ENCODE measurements at regions of chr11 and their contacts with region 1.

Region 1: GRCh38 chr11:76152086-76152681 is 54.1 kb downstream of the WNT11 start:
- DNase-seq: peak; percentile 95
- ATAC-seq: peak; percentile 98
- H3K4me3 Mint-ChIP-seq: peak overlapping the region; percentile 61
- H3K27ac Mint-ChIP-seq: peak overlapping the region; percentile 63
- H3K4me1 Mint-ChIP-seq: peaks cover 25% of the 10 kb centered on the region
- H3K27me3 Mint-ChIP-seq: peaks cover 9% of the 10 kb centered on the region
- CTCF ChIP-seq: peak; percentile 96

Region 2: DNA sequence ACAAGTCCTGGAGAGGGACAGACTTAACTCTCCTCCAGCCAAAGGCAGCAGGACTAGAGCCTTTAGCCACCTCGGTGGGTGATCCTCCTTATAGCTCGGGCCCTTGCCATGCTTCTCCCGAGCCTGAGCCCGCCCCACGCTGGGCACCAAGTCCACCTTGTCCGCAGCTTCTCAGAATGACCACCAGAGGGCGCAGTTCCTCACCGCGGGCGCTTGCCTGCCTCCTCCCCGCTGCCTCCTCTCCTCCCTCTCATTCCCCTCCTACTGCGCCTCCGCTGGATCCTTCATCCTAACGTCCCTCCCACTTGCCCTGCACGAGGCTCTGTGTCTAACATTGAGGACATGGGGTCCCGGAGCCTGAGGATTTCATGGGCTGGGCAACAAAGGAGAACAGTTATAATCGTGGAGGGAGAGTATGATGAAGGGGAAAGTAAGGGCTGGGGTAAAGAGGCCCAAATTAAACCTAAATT is 445.9 kb before region 1 on chr11:
- CTCF ChIA-PET with region 1: interaction called, 11 read pairs
- POLR2A ChIA-PET with region 1: no interaction called
- intact Hi-C with region 1: no loop called
- DNase-seq: peak; percentile 65
- ATAC-seq: peak; percentile 98
- H3K4me3 Mint-ChIP-seq: no peak overlapping the region
- H3K27ac Mint-ChIP-seq: no peak overlapping the region
- H3K4me1 Mint-ChIP-seq: no peaks in the 10 kb centered on the region
- H3K27me3 Mint-ChIP-seq: peaks cover 3% of the 10 kb centered on the region
- CTCF ChIP-seq: peak; percentile 94

Region 3: GRCh38 chr11:75862437-75862836 is 289.7 kb before region 1 on chr11:
- CTCF ChIA-PET with region 1: interaction called, 10 read pairs
- POLR2A ChIA-PET with region 1: no interaction called
- intact Hi-C with region 1: no loop called
- DNase-seq: no peak
- ATAC-seq: no peak
- H3K4me3 Mint-ChIP-seq: no peak overlapping the region
- H3K27ac Mint-ChIP-seq: no peak overlapping the region
- H3K4me1 Mint-ChIP-seq: peaks cover 5% of the 10 kb centered on the region
- H3K27me3 Mint-ChIP-seq: no peaks in the 10 kb centered on the region
- CTCF ChIP-seq: no peak

Region 4: GRCh38 chr11:75896843-75897419 is 255.3 kb before region 1 on chr11:
- CTCF ChIA-PET with region 1: interaction called, 192 read pairs
- POLR2A ChIA-PET with region 1: interaction called, 5 read pairs
- intact Hi-C with region 1: loop called (anchors 2 kb)
- DNase-seq: no peak
- ATAC-seq: peak; percentile 49
- H3K4me3 Mint-ChIP-seq: no peak overlapping the region
- H3K27ac Mint-ChIP-seq: no peak overlapping the region
- H3K4me1 Mint-ChIP-seq: peaks cover 31% of the 10 kb centered on the region
- H3K27me3 Mint-ChIP-seq: no peaks in the 10 kb centered on the region
- CTCF ChIP-seq: peak; percentile 83

Region 5: GRCh38 chr11:76107971-76108370 is 44.2 kb before region 1 on chr11:
- CTCF ChIA-PET with region 1: interaction called, 19 read pairs
- POLR2A ChIA-PET with region 1: no interaction called
- intact Hi-C with region 1: no loop called
- DNase-seq: no peak
- ATAC-seq: no peak
- H3K4me3 Mint-ChIP-seq: no peak overlapping the region
- H3K27ac Mint-ChIP-seq: no peak overlapping the region
- H3K4me1 Mint-ChIP-seq: no peaks in the 10 kb centered on the region
- H3K27me3 Mint-ChIP-seq: no peaks in the 10 kb centered on the region
- CTCF ChIP-seq: no peak

Region 6: GRCh38 chr11:76120513-76121101 is 31.6 kb before region 1 on chr11:
- CTCF ChIA-PET with region 1: interaction called, 11 read pairs
- POLR2A ChIA-PET with region 1: no interaction called
- intact Hi-C with region 1: no loop called
- DNase-seq: no peak
- ATAC-seq: no peak
- H3K4me3 Mint-ChIP-seq: no peak overlapping the region
- H3K27ac Mint-ChIP-seq: no peak overlapping the region
- H3K4me1 Mint-ChIP-seq: no peaks in the 10 kb centered on the region
- H3K27me3 Mint-ChIP-seq: no peaks in the 10 kb centered on the region
- CTCF ChIP-seq: no peak

Region 7: DNA sequence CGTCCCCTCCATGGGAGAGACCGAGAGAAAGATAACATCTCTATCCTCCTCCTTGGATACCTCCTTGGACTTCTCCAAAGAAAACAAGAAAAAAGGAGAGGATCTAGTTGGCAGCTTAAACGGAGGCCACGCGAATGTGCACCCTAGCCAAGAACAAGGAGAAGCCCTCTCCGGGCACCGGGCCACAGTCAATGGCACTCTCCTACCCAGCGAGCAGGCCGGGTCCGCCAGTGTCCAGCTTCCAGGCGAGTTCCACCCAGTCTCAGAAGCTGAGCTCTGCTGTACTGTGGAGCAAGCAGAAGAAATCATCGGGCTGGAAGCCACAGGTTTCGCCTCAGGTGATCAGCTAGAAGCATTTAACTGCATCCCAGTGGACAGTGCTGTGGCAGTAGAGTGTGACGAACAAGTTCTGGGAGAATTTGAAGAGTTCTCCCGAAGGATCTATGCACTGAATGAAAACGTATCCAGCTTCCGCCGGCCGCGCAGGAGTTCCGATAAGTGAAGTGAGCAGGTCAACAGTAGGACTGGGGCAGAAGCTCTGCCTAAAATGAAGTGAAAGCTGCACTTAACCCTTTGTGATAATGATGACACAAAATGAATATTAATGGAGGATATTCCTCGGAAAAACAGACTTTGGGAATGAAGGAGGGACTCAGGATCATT is 11.1 kb before region 1 on chr11:
- CTCF ChIA-PET with region 1: interaction called, 48 read pairs
- POLR2A ChIA-PET with region 1: no interaction called
- intact Hi-C with region 1: no loop called
- DNase-seq: no peak
- ATAC-seq: no peak
- H3K4me3 Mint-ChIP-seq: no peak overlapping the region
- H3K27ac Mint-ChIP-seq: no peak overlapping the region
- H3K4me1 Mint-ChIP-seq: no peaks in the 10 kb centered on the region
- H3K27me3 Mint-ChIP-seq: no peaks in the 10 kb centered on the region
- CTCF ChIP-seq: no peak